SK-N-SH (cell line): ENCODE measurements at regions of chr19 and their contacts with region 1.

Region 1: DNA sequence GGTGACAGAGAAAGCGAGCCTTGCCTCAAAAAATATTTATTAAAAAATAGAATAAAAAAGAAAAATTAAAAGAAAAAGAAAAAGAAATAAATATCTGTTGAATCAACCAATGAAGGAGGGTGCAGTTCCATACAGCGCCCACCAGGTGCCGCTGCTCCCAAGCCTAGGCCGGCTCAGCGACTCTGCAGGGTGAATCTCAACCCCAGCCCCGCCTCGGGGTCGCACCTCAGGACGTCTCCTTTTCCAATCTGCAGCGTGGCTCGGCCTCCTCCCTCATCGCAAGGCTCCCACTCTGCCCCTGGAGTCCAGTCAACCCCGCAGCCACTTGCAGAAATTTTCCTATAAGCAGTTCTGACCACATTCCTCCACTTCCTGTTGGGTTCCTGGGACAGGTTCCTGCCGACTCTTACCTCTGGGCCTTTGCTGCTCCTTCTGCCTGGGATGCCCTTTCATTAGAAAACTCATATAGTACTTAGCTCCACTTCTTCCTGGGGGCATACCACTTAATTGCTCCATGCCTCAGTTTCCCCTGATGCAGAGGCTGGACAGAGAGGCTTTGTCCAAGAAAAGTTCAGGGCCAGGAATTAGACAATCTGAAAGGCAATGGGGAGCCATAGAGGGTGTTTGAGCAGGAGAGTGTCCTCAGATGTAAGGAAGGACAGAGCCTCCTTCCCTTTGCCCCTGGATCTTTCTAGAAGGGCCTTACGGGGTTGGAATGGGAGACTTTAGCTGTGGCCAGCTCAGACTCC is 24.3 kb downstream of the NFILZ start:
- DNase-seq: peak; percentile 81
- H3K4me3 ChIP-seq: no peak overlapping the region; a peak in 1 of 4 replicates
- H3K27ac ChIP-seq: no peak overlapping the region
- H3K4me1 ChIP-seq: no peaks in the 10 kb centered on the region; a peak in 1 of 4 replicates
- H3K27me3 ChIP-seq: peaks cover 82% of the 10 kb centered on the region
- CTCF ChIP-seq: peak; percentile 80
- EP300 ChIP-seq: no peak
- RAD21 ChIP-seq: peak; percentile 83

Region 2: GRCh38 chr19:8641908-8642547 is 12.7 kb before region 1 on chr19:
- CTCF ChIA-PET with region 1: interaction called, 14 read pairs
- POLR2A ChIA-PET with region 1: no interaction called
- DNase-seq: peak; percentile 44
- H3K4me3 ChIP-seq: no peak overlapping the region
- H3K27ac ChIP-seq: no peak overlapping the region
- H3K4me1 ChIP-seq: peaks cover 0 to 7% of the 10 kb centered on the region in 2 experiments; a peak in 1 of 4 replicates
- H3K27me3 ChIP-seq: peaks cover 29% of the 10 kb centered on the region; the same call in 1 of the 2 replicates
- CTCF ChIP-seq: peak; percentile 64
- EP300 ChIP-seq: no peak
- RAD21 ChIP-seq: peak; percentile 54

Region 3: GRCh38 chr19:8697671-8698432 is 43.1 kb after region 1 on chr19:
- CTCF ChIA-PET with region 1: interaction called, 24 read pairs
- POLR2A ChIA-PET with region 1: no interaction called
- DNase-seq: peak; percentile 61
- H3K4me3 ChIP-seq: no peak overlapping the region
- H3K27ac ChIP-seq: no peak overlapping the region
- H3K4me1 ChIP-seq: no peaks in the 10 kb centered on the region
- H3K27me3 ChIP-seq: peaks cover 24% of the 10 kb centered on the region; the same call in 1 of the 2 replicates
- CTCF ChIP-seq: peak; percentile 33
- EP300 ChIP-seq: no peak
- RAD21 ChIP-seq: no peak